ENCODE measurements at regions of chr17 and their contacts with region 1.

Region 1: GRCh38 chr17:57955183-57955931 is at the start of gene CUEDC1:
- DNase-seq: peak; percentile 83
- CTCF ChIP-seq: peak; percentile 34

Region 2: DNA sequence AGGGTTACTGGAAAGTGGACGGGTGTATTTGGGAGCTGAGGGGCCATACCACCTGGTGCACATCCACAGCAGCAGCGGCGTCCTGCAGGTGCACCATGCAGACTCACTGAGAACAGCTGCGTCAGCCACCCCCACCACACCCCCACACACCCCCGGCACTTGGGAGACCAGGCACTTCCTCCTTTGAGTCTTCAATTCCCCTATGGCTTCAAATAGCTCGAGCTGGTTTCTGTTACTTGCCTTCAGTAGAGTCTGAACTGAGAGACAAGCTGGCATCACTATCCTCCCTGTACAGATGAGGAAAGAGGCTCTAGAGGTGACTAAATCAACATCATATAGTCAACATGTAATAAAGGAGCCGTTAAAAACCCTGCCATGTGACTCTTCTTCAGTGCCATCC is 15.6 kb before region 1 on chr17:
- CTCF ChIA-PET with region 1: interaction called, 18 read pairs
- POLR2A ChIA-PET with region 1: no interaction called
- DNase-seq: peak; percentile 77
- CTCF ChIP-seq: no peak

Region 3: DNA sequence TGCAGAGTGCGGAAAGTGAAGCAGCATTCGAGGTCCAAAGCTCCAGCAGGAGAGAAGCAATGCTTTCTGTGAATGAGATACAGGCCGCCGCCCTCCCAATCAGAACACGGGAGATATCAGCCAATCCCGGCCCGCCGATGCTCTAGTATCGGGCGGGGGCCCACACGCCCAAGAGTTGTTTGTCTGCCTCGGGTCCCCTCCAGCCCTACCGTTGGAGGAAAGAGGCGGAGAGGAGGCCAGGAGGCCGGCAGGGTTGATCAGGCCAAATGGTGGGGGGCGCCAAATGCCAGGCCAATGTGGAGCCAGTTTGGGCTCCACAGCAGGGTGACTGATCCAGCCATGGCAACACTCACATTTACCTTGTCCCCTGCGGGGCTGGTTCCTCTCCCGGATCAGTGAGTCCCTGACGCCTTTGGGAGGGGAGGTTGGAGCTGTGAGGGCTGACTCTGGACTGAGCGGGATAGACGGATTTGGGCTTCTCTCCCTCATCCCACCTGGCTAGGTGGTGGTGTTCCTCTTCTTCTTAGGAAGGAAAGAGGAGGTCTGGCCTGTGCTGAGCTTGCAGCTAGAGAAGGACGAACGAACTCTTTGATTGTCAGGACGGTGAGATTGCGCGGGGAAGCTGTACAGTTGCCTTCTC is 10.3 kb after region 1 on chr17:
- CTCF ChIA-PET with region 1: interaction called, 13 read pairs
- POLR2A ChIA-PET with region 1: no interaction called
- DNase-seq: no peak
- CTCF ChIP-seq: no peak

Region 4: DNA sequence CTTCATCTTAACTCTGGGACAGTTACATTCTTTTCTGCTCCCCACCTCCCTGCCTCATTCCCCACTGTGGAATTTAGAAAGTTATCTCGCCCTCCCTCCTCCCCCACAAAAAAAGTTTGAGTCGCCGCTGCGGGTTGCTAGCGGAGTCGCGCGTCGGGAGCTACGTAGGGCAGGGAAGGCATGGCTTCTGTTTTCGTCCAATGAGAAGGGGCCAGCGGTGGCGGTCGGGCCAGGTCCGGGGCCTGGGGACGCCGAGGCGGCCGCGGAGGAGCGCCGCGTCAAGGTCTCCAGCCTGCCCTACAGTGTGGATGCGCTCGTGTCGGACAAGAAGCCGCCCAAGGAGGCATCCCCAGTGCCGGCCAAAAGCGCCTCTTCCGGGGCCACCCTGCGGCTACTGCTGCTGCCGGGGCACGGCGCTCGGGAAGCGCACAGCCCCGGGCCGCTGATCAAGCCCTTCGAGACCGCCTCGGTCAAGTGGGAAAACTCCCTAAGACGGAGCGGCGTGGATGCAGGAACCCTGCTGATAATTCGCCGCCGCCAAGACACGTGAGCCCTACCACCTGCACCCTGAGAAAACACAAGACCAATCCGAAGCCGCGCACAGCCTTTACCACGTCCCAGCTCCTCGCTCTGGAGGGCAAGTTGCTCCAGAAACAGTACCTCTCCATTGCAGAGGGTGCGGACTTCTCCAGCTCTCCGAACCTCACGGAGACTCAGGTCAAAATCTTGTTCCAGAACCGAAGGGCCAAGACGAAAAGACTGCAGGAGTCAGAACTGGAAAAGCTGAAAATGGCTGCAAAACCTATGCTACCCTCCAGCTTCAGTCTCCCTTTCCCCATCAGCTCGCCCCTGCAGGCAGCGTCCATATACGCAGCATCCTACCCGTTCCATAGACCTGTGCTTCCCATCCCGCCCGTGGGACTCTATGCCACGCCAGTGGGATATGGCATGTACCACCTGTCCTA is 201.8 kb after region 1 on chr17:
- CTCF ChIA-PET with region 1: no interaction called
- POLR2A ChIA-PET with region 1: no interaction called
- DNase-seq: no peak
- CTCF ChIP-seq: no peak